GM23248 (cell line): ENCODE measurements at regions of chr11 and their contacts with region 1.

Region 1: GRCh38 chr11:27698872-27699474 is 1.3 kb downstream of the BDNF start:
- DNase-seq: peak; percentile 92
- H3K4me3 ChIP-seq: peak overlapping the region; percentile 92
- H3K27ac ChIP-seq: peak overlapping the region; percentile 48
- H3K4me1 ChIP-seq: peaks cover 45% of the 10 kb centered on the region
- H3K27me3 ChIP-seq: no peaks in the 10 kb centered on the region

Region 2: GRCh38 chr11:27429761-27430412 is 269.1 kb before region 1 on chr11:
- in situ Hi-C with region 1: no loop called
- DNase-seq: peak; percentile 38
- H3K4me3 ChIP-seq: no peak overlapping the region
- H3K27ac ChIP-seq: no peak overlapping the region
- H3K4me1 ChIP-seq: peaks cover 26% of the 10 kb centered on the region
- H3K27me3 ChIP-seq: no peaks in the 10 kb centered on the region

Region 3: DNA sequence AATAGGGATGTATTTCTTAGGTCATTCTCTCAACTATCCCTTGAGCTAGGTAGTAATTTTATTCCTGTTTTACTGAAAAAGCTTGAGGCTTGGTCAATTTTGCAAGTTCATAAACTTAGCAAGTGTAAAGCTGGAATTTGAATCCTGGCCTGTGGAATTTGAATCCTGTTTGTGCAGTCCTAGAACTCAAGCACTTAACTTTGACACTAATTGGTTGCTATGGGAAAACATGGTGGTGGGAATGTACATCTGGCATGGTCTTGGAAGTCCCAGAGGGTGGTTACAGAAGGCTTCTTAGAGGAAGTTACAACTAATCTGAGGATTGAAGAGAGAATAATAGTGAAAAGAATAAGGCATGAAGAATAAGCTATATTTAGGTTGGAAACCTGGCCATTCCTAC is 126.0 kb before region 1 on chr11:
- in situ Hi-C with region 1: no loop called
- DNase-seq: no peak
- H3K4me3 ChIP-seq: no peak overlapping the region
- H3K27ac ChIP-seq: no peak overlapping the region
- H3K4me1 ChIP-seq: peaks cover 10% of the 10 kb centered on the region
- H3K27me3 ChIP-seq: no peaks in the 10 kb centered on the region

Region 4: DNA sequence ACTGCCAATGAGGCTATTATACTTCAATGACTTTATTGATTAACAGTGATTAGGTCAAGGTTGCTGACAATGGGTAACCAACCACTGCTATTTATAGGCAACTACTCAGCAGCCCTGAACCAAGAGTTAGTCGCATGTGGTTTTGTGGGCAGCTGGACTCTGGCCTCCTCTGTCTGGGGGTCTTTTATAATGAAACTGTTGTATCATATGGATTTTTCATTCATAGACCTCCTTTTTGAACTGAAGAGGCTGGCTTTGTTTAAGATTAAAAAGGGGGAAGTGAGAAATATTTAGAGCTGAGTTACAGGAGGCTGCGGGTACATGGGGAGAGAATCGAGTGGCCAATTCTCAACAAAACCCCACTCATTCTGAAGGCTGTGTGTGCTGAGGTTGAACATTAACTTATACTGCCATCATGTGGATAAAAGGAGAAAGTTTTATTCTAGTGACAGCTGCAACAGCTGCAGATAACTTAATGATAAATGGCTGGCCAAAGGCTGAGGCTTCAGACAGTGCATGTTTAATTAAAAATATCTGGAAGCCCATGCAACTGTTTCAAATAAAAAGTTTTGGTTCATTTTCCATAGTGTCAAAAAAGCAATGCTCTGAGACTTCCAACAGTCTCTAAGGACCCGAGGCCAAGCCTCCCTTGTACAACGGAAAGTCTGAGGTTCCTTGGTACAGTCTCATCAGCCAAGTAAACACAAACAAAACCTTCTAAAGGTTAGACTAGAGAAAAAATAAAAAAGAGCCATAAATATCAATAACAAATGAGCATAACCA is 1635.2 kb after region 1 on chr11:
- in situ Hi-C with region 1: loop called (anchors 10 kb)
- DNase-seq: peak; percentile 77
- H3K4me3 ChIP-seq: no peak overlapping the region
- H3K27ac ChIP-seq: peak overlapping the region; percentile 75
- H3K4me1 ChIP-seq: peaks cover 57% of the 10 kb centered on the region
- H3K27me3 ChIP-seq: no peaks in the 10 kb centered on the region